ENCODE measurements at regions of chr17 and their contacts with region 1.

Region 1: DNA sequence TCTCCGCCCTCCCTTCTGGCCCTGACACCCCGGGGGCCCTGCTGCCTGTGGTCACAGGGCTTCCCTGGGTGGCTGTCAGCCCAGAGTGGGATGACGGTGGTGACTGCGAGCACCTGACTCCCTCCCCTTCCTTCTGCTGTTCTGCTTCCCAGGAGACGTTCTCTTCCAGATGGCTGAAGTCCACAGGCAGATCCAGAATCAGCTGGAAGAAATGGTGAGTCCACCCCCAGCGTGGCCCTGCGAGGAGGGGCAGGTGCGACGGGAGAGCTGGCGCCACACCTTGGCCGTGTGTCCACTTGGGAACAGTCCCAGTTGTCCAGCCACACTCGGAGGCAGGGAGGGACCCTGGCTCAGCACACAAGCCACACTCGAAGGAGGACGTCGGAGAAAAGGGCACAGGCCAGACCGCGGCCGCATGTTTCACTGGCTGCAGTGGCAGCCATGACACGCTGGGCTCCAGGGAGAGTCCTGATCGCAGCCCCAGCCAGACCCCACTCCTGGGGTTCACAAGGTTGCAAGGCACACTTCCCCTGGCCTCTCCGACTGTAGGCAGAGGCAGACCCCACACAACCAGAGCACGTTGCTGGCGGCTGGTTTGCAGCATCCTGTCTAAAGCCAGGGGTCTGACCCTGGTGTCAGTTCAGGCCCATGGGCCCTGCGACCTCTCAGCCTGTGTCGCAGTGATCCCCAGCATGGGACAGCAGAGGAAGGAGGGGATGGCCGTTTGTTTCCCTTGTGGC is 49.9 kb downstream of the BAIAP2 start:
- DNase-seq: no peak
- H3K4me3 ChIP-seq: no peak overlapping the region
- H3K27ac ChIP-seq: no peak overlapping the region
- H3K4me1 ChIP-seq: no peaks in the 10 kb centered on the region
- H3K27me3 ChIP-seq: no peaks in the 10 kb centered on the region
- CTCF ChIP-seq: no peak
- EP300 ChIP-seq: no peak
- POLR2A ChIP-seq: no peak

Region 2: GRCh38 chr17:80991645-80992076 is 93.2 kb before region 1 on chr17 and contains the start of gene CHMP6:
- intact Hi-C with region 1: no loop called
- DNase-seq: peak; percentile 71 to 88 (median 82)
- H3K4me3 ChIP-seq: peak within 1 kb of the TSS; percentile 84
- H3K27ac ChIP-seq: peak within 1 kb of the TSS; percentile 67 to 85
- H3K4me1 ChIP-seq: peaks cover 6% of the 10 kb centered on the region
- H3K27me3 ChIP-seq: no peaks in the 10 kb centered on the region
- CTCF ChIP-seq: peak in 2 of 3 donors; percentile 78 to 83
- EP300 ChIP-seq: no peak
- POLR2A ChIP-seq: no peak
- total RNA-seq, gene CHMP6: 18.5 to 29.7 (median 26.5) TPM

Region 3: GRCh38 chr17:81046770-81047359 is 38.0 kb before region 1 on chr17:
- intact Hi-C with region 1: loop called in 1 of 4 experiments (anchors 2 kb)
- DNase-seq: no peak
- H3K4me3 ChIP-seq: no peak overlapping the region
- H3K27ac ChIP-seq: no peak overlapping the region
- H3K4me1 ChIP-seq: peaks cover 5% of the 10 kb centered on the region
- H3K27me3 ChIP-seq: no peaks in the 10 kb centered on the region
- CTCF ChIP-seq: no peak
- EP300 ChIP-seq: no peak
- POLR2A ChIP-seq: no peak

Measured in ovary (tissue), 10 donors.